ENCODE measurements at regions of chr1 and their contacts with region 1.

Region 1: DNA sequence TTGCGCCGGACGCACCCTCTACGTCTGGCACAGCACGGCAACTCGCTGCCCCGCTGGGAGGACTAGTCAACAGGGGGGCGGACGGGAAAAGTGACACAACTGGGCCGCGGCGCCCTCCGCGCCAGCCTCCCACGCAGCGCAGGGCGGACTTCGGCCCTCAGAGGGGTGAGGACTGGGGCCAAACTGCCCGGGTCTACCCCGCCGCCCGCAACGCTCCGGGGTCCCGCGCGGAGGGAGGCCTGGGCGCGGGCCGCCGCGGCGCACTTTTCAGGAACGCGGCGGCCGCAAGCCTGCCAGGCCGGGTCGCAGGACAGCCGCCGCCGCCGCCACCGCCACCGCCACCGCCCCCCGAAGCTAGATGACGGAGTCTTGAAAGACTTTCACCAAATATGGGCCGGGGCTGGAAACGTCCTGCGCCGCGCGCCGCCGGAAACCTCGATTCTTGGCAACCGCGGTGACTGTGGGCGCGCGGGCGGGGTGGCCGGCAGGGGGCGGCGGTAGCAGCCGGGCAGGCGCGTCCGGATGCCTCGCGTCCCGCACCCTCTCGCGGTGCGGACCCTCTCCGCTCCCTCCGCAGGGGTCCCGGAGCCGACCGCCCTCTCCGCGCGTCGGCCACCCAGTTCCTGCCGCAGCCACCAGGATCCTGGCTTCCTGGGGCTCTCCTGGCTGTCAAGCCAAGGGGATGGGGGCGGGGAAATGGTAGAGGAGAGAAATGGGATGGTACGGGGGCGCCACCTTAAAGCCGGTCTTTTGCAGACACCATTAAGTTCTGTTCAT is 3.7 kb upstream of the CCN1 start:
- DNase-seq: peak; percentile 88
- ATAC-seq: peak; percentile 46
- H3K4me3 ChIP-seq: peak overlapping the region; percentile 79
- H3K27ac ChIP-seq: peak overlapping the region; percentile 49
- H3K4me1 ChIP-seq: peaks cover 47% of the 10 kb centered on the region
- H3K27me3 ChIP-seq: no peaks in the 10 kb centered on the region
- CTCF ChIP-seq: peak; percentile 70

Region 2: GRCh38 chr1:85344256-85344694 is 232.6 kb before region 1 on chr1:
- CTCF ChIA-PET with region 1: no interaction called
- POLR2A ChIA-PET with region 1: interaction called, 5 read pairs
- intact Hi-C with region 1: loop called (anchors 5 kb)
- DNase-seq: peak; percentile 63
- ATAC-seq: peak; percentile 78
- H3K4me3 ChIP-seq: no peak overlapping the region
- H3K27ac ChIP-seq: peak overlapping the region; percentile 71
- H3K4me1 ChIP-seq: peaks cover 57% of the 10 kb centered on the region
- H3K27me3 ChIP-seq: no peaks in the 10 kb centered on the region
- CTCF ChIP-seq: peak; percentile 85

Region 3: GRCh38 chr1:85406887-85407533 is 169.8 kb before region 1 on chr1:
- CTCF ChIA-PET with region 1: no interaction called
- POLR2A ChIA-PET with region 1: interaction called, 20 read pairs
- intact Hi-C with region 1: loop called (anchors 2 kb)
- DNase-seq: peak; percentile 91
- ATAC-seq: peak; percentile 99
- H3K4me3 ChIP-seq: peak overlapping the region; percentile 54
- H3K27ac ChIP-seq: peak overlapping the region; percentile 70
- H3K4me1 ChIP-seq: peaks cover 18% of the 10 kb centered on the region
- H3K27me3 ChIP-seq: no peaks in the 10 kb centered on the region
- CTCF ChIP-seq: no peak

Region 4: DNA sequence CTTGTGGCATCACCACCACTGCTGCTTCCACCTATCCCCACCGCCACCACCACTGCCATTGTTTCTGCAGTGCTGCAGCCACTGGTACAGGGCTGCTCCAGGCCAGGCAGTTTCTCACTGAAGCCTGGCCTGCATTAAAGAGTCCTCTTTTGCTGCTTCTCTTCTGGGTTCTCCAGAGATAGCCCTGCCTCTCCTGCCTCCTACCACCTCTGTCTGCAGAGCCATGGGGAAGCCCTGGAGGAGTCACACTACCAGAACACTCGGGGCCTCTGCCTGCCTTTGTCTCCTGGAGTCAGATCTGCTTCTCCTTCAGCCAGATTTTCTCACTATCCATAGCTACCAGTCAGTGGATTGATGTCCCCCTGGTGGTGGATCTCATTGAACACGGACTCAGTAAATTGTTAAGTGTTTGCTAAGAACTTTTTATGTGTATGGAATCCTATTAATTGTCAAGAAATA is 74.2 kb before region 1 on chr1:
- CTCF ChIA-PET with region 1: no interaction called
- POLR2A ChIA-PET with region 1: interaction called, 7 read pairs
- intact Hi-C with region 1: loop called (anchors 2 kb)
- DNase-seq: peak; percentile 79
- ATAC-seq: peak; percentile 87
- H3K4me3 ChIP-seq: no peak overlapping the region
- H3K27ac ChIP-seq: no peak overlapping the region
- H3K4me1 ChIP-seq: peaks cover 11% of the 10 kb centered on the region
- H3K27me3 ChIP-seq: no peaks in the 10 kb centered on the region
- CTCF ChIP-seq: peak; percentile 75

Region 5: GRCh38 chr1:85628791-85629531 is 52.1 kb after region 1 on chr1:
- CTCF ChIA-PET with region 1: interaction called, 3 read pairs
- POLR2A ChIA-PET with region 1: interaction called, 10 read pairs
- intact Hi-C with region 1: no loop called
- DNase-seq: peak; percentile 86
- ATAC-seq: peak; percentile 94
- H3K4me3 ChIP-seq: peak overlapping the region; percentile 47
- H3K27ac ChIP-seq: peak overlapping the region; percentile 97
- H3K4me1 ChIP-seq: peaks cover 34% of the 10 kb centered on the region
- H3K27me3 ChIP-seq: no peaks in the 10 kb centered on the region
- CTCF ChIP-seq: no peak

Region 6: GRCh38 chr1:85850238-85850637 is 273.4 kb after region 1 on chr1:
- CTCF ChIA-PET with region 1: no interaction called
- POLR2A ChIA-PET with region 1: interaction called, 11 read pairs
- intact Hi-C with region 1: no loop called
- DNase-seq: peak; percentile 96
- ATAC-seq: peak; percentile 98
- H3K4me3 ChIP-seq: no peak overlapping the region
- H3K27ac ChIP-seq: peak overlapping the region; percentile 89
- H3K4me1 ChIP-seq: peaks cover 26% of the 10 kb centered on the region
- H3K27me3 ChIP-seq: no peaks in the 10 kb centered on the region
- CTCF ChIP-seq: peak; percentile 77

Region 7: GRCh38 chr1:86289161-86289560 is 712.3 kb after region 1 on chr1:
- CTCF ChIA-PET with region 1: no interaction called
- POLR2A ChIA-PET with region 1: no interaction called
- intact Hi-C with region 1: no loop called
- DNase-seq: no peak
- ATAC-seq: no peak
- H3K4me3 ChIP-seq: no peak overlapping the region
- H3K27ac ChIP-seq: no peak overlapping the region
- H3K4me1 ChIP-seq: no peaks in the 10 kb centered on the region
- H3K27me3 ChIP-seq: peaks cover 68% of the 10 kb centered on the region
- CTCF ChIP-seq: no peak

Measured in PC-3 (cell line).